Body of pancreas (tissue), 4 donors: ENCODE measurements at regions of chr19 and their contacts with region 1.

Region 1: GRCh38 chr19:39412100-39412866 is at the start of gene PLEKHG2:
- DNase-seq: peak; percentile 95 to 99 (median 97)
- ATAC-seq: peak; percentile 75
- H3K4me3 ChIP-seq: peak within 1 kb of the TSS; percentile 30 to 33
- H3K27ac ChIP-seq: peak within 1 kb of the TSS; percentile 88 to 98 (median 96)
- H3K4me1 ChIP-seq: peaks cover 53% of the 10 kb centered on the region
- H3K27me3 ChIP-seq: no peaks in the 10 kb centered on the region
- CTCF ChIP-seq: peak in 6 of 7 experiments; percentile 73 to 88 (median 78)
- POLR2A ChIP-seq: peak; percentile 60 to 94 (median 90)
- total RNA-seq, gene PLEKHG2: 6.7 to 13.2 TPM

Region 2: DNA sequence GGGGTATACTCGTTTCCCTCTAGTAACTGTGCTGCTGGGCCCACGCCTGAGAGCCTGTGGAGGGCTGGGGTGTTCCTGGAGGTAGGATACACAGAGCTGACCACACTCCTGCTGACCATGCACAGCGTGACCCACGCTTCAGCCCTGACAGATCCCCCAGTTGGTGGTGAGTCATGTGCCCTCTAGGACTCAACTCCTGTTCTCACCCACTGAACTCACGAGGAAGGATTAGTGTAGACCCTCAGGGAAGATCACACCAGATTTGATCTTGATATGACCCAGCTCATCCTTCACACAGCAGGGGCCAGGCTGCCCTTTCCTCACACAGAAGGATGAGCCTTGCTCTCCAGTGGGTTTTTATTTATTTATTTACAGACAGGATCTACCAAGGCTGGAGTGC is 341.4 kb before region 1 on chr19:
- intact Hi-C with region 1: no loop called
- DNase-seq: no peak
- ATAC-seq: no peak
- H3K4me3 ChIP-seq: no peak overlapping the region
- H3K27ac ChIP-seq: no peak overlapping the region
- H3K4me1 ChIP-seq: no peaks in the 10 kb centered on the region
- H3K27me3 ChIP-seq: no peaks in the 10 kb centered on the region
- CTCF ChIP-seq: no peak
- POLR2A ChIP-seq: no peak

Region 3: DNA sequence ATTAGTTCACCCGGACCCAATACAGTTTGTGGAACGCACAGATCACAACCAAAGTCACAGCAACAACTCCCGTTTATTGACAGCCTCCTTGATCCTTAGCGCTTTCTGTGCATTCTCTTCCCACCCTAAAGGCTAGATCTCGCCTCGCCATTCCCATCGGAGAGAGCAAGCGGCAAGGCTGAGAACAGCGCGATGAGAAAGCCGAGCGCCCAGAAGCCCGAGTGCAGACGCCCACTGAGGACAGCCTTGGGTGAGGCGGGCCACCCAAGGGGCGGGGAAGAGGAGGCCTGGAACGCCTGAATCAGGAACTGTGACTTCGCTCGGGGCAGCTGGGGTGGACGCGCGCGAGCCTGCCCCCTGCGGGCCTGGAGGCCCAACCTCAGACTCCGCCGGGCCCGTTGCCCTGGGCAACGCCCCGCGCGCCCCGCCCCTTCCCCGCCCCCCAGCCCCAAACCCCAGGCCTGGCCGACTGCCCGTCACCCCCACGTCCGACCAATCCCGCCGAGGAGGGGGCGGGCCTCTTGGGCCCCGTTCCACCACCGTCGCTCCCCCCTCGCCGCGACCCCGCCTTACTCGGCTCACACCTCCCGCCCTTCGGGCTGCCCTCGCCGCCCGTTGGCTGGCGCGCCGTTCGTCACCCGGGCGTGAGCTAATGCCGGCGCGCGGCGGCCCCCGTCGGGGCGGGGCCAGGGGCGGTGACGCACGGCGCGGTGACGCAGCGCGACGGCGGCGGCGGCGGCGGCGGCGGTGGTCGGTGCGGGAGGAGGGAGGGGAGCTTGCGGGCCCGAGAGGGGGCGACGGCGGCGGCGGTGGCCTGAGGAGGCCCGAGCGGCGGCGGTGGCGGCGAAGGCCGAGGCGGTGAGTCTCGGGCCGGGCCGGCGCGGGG is 70.3 kb before region 1 on chr19 and contains the start of gene SAMD4B:
- intact Hi-C with region 1: loop called (anchors 10 kb)
- DNase-seq: peak; percentile 99
- ATAC-seq: peak; percentile 94
- H3K4me3 ChIP-seq: peak within 1 kb of the TSS; percentile 70
- H3K27ac ChIP-seq: peak within 1 kb of the TSS; percentile 74 to 89 (median 80)
- H3K4me1 ChIP-seq: peaks cover 41% of the 10 kb centered on the region
- H3K27me3 ChIP-seq: no peaks in the 10 kb centered on the region
- CTCF ChIP-seq: peak; percentile 77 to 97 (median 86)
- POLR2A ChIP-seq: peak; percentile 69 to 96 (median 95)
- total RNA-seq, gene SAMD4B: 41.5 to 77.8 TPM

Region 4: DNA sequence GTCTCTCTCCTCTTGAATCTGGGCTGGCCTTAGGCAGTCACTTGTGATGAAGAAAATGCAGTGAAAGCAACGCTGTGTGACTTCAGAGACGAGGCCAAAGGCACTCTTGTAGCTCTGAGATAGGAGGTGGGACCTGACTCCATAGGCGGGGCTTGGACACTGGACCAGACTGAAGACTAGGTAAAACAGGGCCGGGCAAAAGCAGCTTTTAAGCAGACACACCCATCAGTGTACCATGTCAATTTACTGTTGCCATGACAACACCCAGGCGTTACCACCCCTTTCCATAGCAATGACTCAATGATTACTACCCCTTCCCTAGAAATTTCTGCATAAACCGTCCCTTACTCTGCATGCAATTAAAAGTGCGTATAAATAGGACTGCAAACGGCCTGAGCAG is 134.3 kb after region 1 on chr19:
- intact Hi-C with region 1: no loop called
- DNase-seq: no peak
- ATAC-seq: no peak
- H3K4me3 ChIP-seq: no peak overlapping the region
- H3K27ac ChIP-seq: no peak overlapping the region
- H3K4me1 ChIP-seq: no peaks in the 10 kb centered on the region
- H3K27me3 ChIP-seq: no peaks in the 10 kb centered on the region
- CTCF ChIP-seq: no peak
- POLR2A ChIP-seq: no peak